Mammary epithelial cell (primary cell): ENCODE measurements at regions of chr5 and their contacts with region 1.

Region 1: DNA sequence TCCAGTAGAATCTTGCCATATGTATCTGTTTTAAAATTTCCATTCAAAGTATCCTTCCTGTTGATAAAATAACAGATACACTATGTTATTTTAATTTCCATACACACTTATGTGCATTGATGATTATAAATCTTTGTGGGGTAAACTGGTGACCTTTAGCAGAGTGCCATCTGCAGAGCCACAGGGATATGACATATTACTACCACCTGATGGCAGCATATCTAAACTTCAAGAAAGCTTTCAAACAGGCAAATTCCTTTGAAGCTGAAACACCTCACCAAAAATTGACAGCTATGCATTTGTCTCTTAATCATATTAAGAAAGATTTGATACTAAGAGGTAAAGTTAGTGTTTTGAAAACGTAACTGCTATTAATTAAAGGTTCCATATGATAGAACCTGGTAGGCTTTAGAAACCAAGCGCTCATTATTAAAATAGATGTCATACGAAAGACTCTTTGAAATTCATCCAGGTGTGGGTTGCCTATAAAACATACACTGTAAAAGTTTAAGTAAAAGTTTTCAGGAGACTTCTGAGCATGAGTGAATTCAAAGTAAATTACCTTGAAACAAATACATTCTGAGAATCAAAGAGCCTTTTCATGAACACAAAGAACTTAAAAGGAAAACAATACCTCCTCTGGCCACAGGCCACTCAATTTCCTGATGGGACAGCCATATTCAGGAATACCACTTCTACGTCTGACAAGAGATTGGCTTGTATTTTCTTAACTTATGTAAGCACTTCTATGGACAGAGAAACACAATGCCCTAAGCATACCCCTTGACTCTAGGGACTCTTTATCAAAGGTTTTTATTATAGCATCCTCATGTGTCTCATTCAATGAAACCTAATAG is 93.3 kb downstream of the KIAA0825 start:
- DNase-seq: peak; percentile 21
- H3K4me3 ChIP-seq: no peak overlapping the region
- H3K27ac ChIP-seq: no peak overlapping the region
- H3K4me1 ChIP-seq: no peaks in the 10 kb centered on the region
- H3K27me3 ChIP-seq: no peaks in the 10 kb centered on the region
- CTCF ChIP-seq: peak; percentile 51 to 70

Region 2: DNA sequence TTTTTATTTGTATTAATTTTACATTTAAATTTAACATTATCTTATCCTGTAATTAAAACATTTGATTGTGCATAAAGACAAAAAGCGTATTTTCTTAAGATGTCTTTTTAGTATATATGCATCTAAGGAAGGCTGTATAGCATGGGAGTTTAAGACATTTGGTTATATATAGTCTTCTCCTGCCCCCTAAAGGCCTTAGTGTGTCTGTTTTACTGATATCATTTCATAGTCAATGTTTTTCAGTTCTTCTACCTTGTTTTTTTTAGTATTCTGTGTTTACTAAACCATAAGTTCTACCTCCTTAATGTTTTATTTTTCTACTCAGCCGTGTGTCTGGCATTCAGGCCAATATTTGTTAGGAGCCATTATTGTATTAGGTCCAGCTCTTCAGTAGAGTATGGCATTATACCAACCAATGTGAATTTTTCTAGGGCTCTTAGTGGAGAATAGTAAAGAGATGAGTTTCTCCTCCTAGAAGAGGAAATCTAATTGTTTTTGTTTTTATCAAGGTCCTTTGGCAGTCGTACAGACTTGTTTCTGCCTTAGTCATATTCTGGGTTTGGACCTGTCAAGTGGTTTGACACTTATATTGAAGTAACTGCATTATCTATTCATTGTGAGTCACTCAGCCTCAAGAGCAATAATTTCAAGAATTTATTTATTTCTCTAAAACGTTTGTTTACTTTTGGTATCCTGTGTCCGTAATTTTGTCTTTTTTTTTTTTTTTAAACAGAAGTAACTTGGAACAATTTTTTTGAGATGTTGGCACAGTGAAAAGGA is 168.2 kb after region 1 on chr5:
- CTCF ChIA-PET with region 1: no interaction called
- dilution Hi-C with region 1: no loop called
- in situ Hi-C with region 1: no loop called
- intact Hi-C with region 1: loop called (anchors 1 kb)
- DNase-seq: peak; percentile 86
- H3K4me3 ChIP-seq: peak overlapping the region in 1 of 3 experiments; percentile 14
- H3K27ac ChIP-seq: peak overlapping the region; percentile 29
- H3K4me1 ChIP-seq: peaks cover 14% of the 10 kb centered on the region
- H3K27me3 ChIP-seq: no peaks in the 10 kb centered on the region
- CTCF ChIP-seq: peak; percentile 23 to 28

Region 3: GRCh38 chr5:94740286-94740685 is 215.2 kb after region 1 on chr5:
- CTCF ChIA-PET with region 1: interaction called, 4 read pairs
- dilution Hi-C with region 1: no loop called
- in situ Hi-C with region 1: no loop called
- intact Hi-C with region 1: loop called (anchors 1 kb)
- DNase-seq: no peak
- H3K4me3 ChIP-seq: no peak overlapping the region
- H3K27ac ChIP-seq: no peak overlapping the region
- H3K4me1 ChIP-seq: no peaks in the 10 kb centered on the region
- H3K27me3 ChIP-seq: no peaks in the 10 kb centered on the region
- CTCF ChIP-seq: no peak

Region 4: GRCh38 chr5:94849821-94850736 is 325.0 kb after region 1 on chr5:
- CTCF ChIA-PET with region 1: no interaction called
- dilution Hi-C with region 1: no loop called
- in situ Hi-C with region 1: no loop called
- intact Hi-C with region 1: loop called (anchors 2 kb)
- DNase-seq: peak; percentile 30
- H3K4me3 ChIP-seq: no peak overlapping the region
- H3K27ac ChIP-seq: no peak overlapping the region
- H3K4me1 ChIP-seq: no peaks in the 10 kb centered on the region
- H3K27me3 ChIP-seq: no peaks in the 10 kb centered on the region
- CTCF ChIP-seq: peak; percentile 59 to 68